MCF 10A (cell line): ENCODE measurements at regions of chr17 and their contacts with region 1.

Region 1: DNA sequence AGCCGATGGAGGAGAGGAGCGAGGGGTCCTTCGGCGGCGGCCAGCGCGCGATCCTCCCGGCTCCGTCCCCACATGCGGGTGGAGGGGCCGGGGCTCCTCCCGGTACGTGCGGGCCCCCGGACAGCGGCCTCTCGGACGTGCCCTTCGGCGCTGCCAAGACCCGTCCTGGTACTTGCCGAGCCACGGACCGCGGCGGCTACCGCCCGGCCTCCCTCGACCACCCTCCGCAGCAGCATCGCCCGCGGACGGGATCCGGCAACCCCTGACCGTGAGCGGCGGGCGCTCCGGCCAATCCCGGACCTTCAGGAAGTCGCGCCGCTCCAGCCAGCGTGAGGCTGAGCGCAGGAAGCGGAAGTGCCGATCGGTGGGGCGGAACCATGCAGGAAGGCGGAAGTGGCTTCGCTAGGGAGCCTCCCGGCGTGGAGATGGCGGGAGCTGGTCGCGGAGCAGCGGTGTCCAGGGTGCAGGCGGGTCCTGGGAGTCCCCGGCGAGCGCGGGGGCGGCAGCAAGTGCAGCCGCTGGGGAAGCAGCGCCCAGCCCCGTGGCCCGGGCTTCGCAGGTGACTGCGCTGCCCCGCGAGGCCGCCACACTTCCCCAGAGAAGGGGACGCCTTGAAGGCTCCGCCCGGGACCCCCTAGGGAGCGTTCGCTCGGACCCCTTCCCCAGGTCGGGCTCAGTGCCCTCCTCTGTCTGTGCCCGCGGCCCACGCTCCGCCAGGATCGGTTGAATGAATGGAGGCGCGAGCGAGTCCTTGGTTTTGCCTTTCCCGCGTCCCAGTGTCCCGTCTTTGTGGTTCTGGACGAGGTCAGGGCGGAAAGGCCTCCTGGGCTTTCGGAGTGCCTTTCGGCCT is at the starts of genes CCDC137 and OXLD1:
- DNase-seq: peak; percentile 92
- H3K4me3 Mint-ChIP-seq: peak within 1 kb of the TSS; percentile 85
- H3K27ac Mint-ChIP-seq: peak within 1 kb of the TSS; percentile 79
- H3K4me1 Mint-ChIP-seq: peaks cover 15% of the 10 kb centered on the region
- H3K27me3 Mint-ChIP-seq: no peaks in the 10 kb centered on the region
- CTCF ChIP-seq: no peak
- total RNA-seq, gene CCDC137: 23.9 and 27.1 TPM in 2 replicates
- total RNA-seq, gene OXLD1: 47.6 and 54.8 TPM in 2 replicates

Region 2: GRCh38 chr17:81445642-81446503 is 220.7 kb before region 1 on chr17:
- CTCF ChIA-PET with region 1: no interaction called
- POLR2A ChIA-PET with region 1: no interaction called
- intact Hi-C with region 1: no loop called
- DNase-seq: no peak
- H3K4me3 Mint-ChIP-seq: no peak overlapping the region
- H3K27ac Mint-ChIP-seq: no peak overlapping the region
- H3K4me1 Mint-ChIP-seq: no peaks in the 10 kb centered on the region
- H3K27me3 Mint-ChIP-seq: no peaks in the 10 kb centered on the region
- CTCF ChIP-seq: no peak

Region 3: DNA sequence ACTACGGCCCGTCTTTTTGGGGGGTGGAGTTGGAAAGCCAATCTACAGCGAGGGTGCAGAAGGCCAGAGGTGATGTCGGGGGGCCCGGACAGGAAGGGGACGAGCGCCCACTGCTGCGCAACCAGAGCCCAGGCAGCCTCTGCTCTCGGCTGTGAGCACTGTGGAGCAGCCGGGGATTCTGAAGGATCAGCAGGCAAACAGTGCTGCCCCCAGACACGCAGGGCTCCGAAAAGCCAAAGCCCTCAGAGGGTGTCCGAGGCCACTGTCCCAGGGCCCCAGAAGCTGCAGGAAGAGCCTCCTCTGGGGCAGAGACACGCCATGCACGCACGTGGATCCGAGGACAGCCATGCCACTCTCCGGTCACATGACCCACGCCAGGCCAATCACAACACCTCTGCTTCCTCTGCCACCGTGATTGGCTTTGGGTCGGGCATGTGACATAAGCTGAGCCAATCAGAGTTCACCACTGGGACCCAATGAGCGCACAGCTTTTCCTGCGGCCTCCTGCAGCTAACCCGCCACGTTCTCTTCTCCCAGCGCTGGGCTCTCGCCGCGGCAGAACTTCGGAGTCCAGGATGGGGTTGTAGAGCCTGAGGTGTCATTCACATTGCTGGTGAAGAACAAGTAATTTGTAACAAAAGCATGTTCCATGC is 194.6 kb before region 1 on chr17:
- CTCF ChIA-PET with region 1: no interaction called
- POLR2A ChIA-PET with region 1: no interaction called
- intact Hi-C with region 1: no loop called
- DNase-seq: no peak
- H3K4me3 Mint-ChIP-seq: no peak overlapping the region
- H3K27ac Mint-ChIP-seq: no peak overlapping the region
- H3K4me1 Mint-ChIP-seq: peaks cover 4% of the 10 kb centered on the region
- H3K27me3 Mint-ChIP-seq: no peaks in the 10 kb centered on the region
- CTCF ChIP-seq: no peak

Region 4: GRCh38 chr17:81636505-81637288 is 29.9 kb before region 1 on chr17 and contains the starts of genes NPLOC4 and TSPAN10:
- CTCF ChIA-PET with region 1: interaction called, 4 read pairs
- POLR2A ChIA-PET with region 1: interaction called, 44 read pairs
- intact Hi-C with region 1: loop called (anchors 2 kb)
- DNase-seq: peak; percentile 86
- H3K4me3 Mint-ChIP-seq: peak within 1 kb of the TSS; percentile 89
- H3K27ac Mint-ChIP-seq: peak within 1 kb of the TSS; percentile 96
- H3K4me1 Mint-ChIP-seq: peaks cover 9% of the 10 kb centered on the region
- H3K27me3 Mint-ChIP-seq: no peaks in the 10 kb centered on the region
- CTCF ChIP-seq: no peak
- total RNA-seq, gene NPLOC4: 83.9 and 95.1 TPM in 2 replicates
- total RNA-seq, gene TSPAN10: 1.8 and 2.1 TPM in 2 replicates

Region 5: GRCh38 chr17:81641825-81642489 is 24.6 kb before region 1 on chr17:
- CTCF ChIA-PET with region 1: interaction called, 4 read pairs
- POLR2A ChIA-PET with region 1: interaction called, 44 read pairs
- intact Hi-C with region 1: loop called (anchors 2 kb)
- DNase-seq: peak; percentile 59
- H3K4me3 Mint-ChIP-seq: no peak overlapping the region
- H3K27ac Mint-ChIP-seq: no peak overlapping the region
- H3K4me1 Mint-ChIP-seq: peaks cover 6% of the 10 kb centered on the region
- H3K27me3 Mint-ChIP-seq: no peaks in the 10 kb centered on the region
- CTCF ChIP-seq: no peak

Region 6: GRCh38 chr17:81651692-81652091 is 14.9 kb before region 1 on chr17:
- CTCF ChIA-PET with region 1: interaction called, 3 read pairs
- POLR2A ChIA-PET with region 1: interaction called, 4 read pairs
- intact Hi-C with region 1: loop called (anchors 2 kb)
- DNase-seq: peak; percentile 87
- H3K4me3 Mint-ChIP-seq: no peak overlapping the region
- H3K27ac Mint-ChIP-seq: no peak overlapping the region
- H3K4me1 Mint-ChIP-seq: peaks cover 7% of the 10 kb centered on the region
- H3K27me3 Mint-ChIP-seq: no peaks in the 10 kb centered on the region
- CTCF ChIP-seq: no peak

Region 7: GRCh38 chr17:81676906-81677305 is 10.3 kb after region 1 on chr17:
- CTCF ChIA-PET with region 1: interaction called, 3 read pairs
- POLR2A ChIA-PET with region 1: interaction called, 101 read pairs
- intact Hi-C with region 1: loop called (anchors 2 kb)
- DNase-seq: no peak
- H3K4me3 Mint-ChIP-seq: no peak overlapping the region
- H3K27ac Mint-ChIP-seq: no peak overlapping the region
- H3K4me1 Mint-ChIP-seq: peaks cover 5% of the 10 kb centered on the region
- H3K27me3 Mint-ChIP-seq: no peaks in the 10 kb centered on the region
- CTCF ChIP-seq: no peak

Region 8: GRCh38 chr17:81917565-81918332 is 251.2 kb after region 1 on chr17 and contains the start of gene SIRT7:
- CTCF ChIA-PET with region 1: no interaction called
- POLR2A ChIA-PET with region 1: no interaction called
- intact Hi-C with region 1: no loop called
- DNase-seq: peak; percentile 75
- H3K4me3 Mint-ChIP-seq: peak within 1 kb of the TSS; percentile 87
- H3K27ac Mint-ChIP-seq: peak within 1 kb of the TSS; percentile 87
- H3K4me1 Mint-ChIP-seq: peaks cover 27% of the 10 kb centered on the region
- H3K27me3 Mint-ChIP-seq: no peaks in the 10 kb centered on the region
- CTCF ChIP-seq: no peak
- total RNA-seq, gene SIRT7: 36.6 and 44.8 TPM in 2 replicates